ENCODE measurements at regions of chr9 and their contacts with region 1.

Region 1: GRCh38 chr9:6681147-6681956 is 35.8 kb upstream of the GLDC start:
- H3K4me3 ChIP-seq: peak overlapping the region; percentile 99
- H3K27ac ChIP-seq: peak overlapping the region; percentile 93
- H3K4me1 ChIP-seq: no peaks in the 10 kb centered on the region
- CTCF ChIP-seq: no peak

Region 2: GRCh38 chr9:6549106-6549800 is 132.1 kb before region 1 on chr9:
- CTCF ChIA-PET with region 1: no interaction called
- POLR2A ChIA-PET with region 1: no interaction called
- H3K4me3 ChIP-seq: no peak overlapping the region
- H3K27ac ChIP-seq: no peak overlapping the region
- H3K4me1 ChIP-seq: peaks cover 15% of the 10 kb centered on the region
- CTCF ChIP-seq: no peak

Region 3: GRCh38 chr9:6703898-6704639 is 22.7 kb after region 1 on chr9:
- CTCF ChIA-PET with region 1: no interaction called
- POLR2A ChIA-PET with region 1: interaction called, 17 read pairs
- H3K4me3 ChIP-seq: peak overlapping the region; percentile 61
- H3K27ac ChIP-seq: peak overlapping the region; percentile 75; the same call in 1 of the 2 replicates
- H3K4me1 ChIP-seq: no peaks in the 10 kb centered on the region
- CTCF ChIP-seq: no peak

Region 4: DNA sequence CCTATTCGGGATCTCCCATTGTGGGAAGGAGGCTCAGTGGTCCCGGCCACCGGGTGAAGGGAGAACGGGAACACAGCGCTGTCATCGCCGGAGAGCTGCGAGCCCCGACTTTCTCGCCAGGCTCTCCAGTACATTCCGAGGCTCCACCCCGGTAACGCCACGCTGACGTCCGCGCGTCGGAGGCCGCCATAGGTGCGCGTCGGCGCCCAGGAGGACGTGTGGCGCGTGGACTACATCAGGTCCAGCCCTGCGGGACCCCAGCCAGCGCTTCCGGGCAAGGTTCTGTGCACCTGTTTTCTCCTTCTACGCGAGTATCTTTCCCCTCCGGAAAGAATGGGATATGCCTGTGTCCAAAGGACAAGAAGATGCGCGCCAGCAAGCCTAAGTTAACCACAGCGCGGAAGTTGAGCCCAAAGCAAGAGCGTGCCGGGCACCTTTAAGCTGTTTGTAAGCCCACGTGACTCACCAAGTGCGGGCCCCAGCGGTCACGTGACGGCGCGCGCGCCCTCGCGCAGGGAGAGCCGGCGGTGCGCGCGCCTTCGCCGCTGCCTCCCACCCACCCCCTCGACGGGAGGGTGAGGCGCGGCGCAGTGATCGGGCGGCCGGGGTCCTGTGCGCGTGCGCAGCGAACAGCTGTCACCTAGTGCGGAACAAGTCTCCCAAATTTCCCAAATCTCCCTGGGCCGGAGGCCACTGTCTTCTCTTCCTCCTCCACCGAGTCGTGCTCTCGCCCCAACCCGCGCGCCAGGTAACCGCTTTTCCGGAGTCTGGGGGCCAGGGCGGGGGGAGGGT is 76.3 kb after region 1 on chr9 and contains the start of gene KDM4C:
- CTCF ChIA-PET with region 1: no interaction called
- POLR2A ChIA-PET with region 1: interaction called, 17 read pairs
- H3K4me3 ChIP-seq: peak within 1 kb of the TSS; percentile 91
- H3K27ac ChIP-seq: peak within 1 kb of the TSS; percentile 58
- H3K4me1 ChIP-seq: no peaks in the 10 kb centered on the region
- CTCF ChIP-seq: no peak

Measured in HEK293 (cell line).